ENCODE measurements at regions of chr6 and their contacts with region 1.

Region 1: GRCh38 chr6:11575408-11576033 is 38.0 kb downstream of the TMEM170B start:
- DNase-seq: peak; percentile 36
- ATAC-seq: peak; percentile 91

Region 2: DNA sequence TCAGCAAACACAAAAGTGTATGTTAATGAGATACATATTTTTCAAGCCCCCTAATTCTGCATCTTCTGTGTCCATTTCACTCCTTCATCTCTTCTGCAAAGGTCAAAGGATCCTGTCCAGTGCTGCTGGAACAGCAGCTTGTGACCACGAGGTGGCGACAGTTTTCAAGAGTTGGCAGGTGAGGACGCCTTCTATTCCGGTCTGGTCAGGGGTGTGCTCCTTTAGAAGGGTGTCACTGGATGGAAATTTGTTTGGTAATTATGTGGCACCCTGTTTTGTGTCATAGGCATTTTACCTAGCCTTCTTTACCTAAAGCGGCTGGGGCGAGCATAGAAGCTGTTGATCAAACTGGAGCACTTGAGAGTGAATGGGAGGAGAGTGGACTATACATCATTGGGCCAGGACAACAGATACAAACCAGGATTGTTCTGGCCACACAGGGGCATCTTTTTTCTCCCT is 431.1 kb before region 1 on chr6:
- intact Hi-C with region 1: loop called (anchors 10 kb)
- DNase-seq: peak; percentile 80
- ATAC-seq: peak; percentile 93

Region 3: DNA sequence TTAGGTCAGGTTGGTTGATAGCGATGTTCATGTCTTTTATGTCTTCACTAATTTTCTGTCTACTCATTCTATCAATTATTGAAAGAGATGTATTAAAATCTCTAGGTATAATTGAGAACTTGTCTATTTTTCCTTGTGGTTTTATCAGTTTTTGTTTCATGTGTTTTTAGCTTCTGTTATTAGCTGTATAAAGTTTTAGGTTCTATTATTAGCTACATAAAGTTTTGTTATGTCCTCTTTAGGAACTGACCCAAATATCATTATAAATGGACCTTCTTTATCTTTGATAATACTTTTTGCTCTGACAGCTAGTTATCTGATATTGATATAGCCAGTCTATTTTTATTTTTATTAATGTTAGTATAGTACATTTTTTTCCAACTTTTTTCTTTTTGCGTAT is 130.4 kb before region 1 on chr6:
- intact Hi-C with region 1: no loop called
- DNase-seq: no peak
- ATAC-seq: no peak

Region 4: DNA sequence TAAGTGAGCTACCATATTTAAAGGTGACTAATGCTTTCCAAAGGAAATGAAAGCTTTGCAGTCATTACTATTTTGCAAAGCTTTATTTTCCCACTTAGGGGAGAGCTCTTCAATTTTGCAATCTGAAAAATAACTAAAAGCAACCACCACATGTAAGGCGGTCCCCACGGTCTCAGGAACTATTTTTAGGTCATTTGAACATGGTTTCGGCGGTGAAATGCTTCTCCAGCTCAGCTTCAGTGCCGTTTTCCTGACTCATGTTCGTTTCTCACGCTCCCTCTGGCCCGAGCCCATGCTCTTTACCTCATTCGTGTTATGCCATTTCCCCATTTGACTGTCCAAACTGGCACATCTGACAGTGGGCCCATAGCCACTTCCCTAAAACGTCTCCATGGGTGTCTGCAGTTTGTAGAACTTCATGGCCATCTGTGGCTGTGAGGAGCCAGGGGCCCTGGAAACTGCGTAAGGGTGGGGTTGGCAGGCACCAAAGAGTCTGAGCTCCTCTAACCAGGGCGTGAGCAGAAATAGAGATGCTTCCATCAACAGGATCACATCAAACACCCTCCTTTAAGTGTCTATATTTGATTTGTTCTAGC is 156.6 kb after region 1 on chr6:
- intact Hi-C with region 1: no loop called
- DNase-seq: peak; percentile 64
- ATAC-seq: peak; percentile 88

Region 5: GRCh38 chr6:11929241-11929850 is 353.8 kb after region 1 on chr6:
- intact Hi-C with region 1: no loop called
- DNase-seq: no peak
- ATAC-seq: no peak